B cell (primary cell): ENCODE measurements at regions of chr14 and their contacts with region 1.

Region 1: DNA sequence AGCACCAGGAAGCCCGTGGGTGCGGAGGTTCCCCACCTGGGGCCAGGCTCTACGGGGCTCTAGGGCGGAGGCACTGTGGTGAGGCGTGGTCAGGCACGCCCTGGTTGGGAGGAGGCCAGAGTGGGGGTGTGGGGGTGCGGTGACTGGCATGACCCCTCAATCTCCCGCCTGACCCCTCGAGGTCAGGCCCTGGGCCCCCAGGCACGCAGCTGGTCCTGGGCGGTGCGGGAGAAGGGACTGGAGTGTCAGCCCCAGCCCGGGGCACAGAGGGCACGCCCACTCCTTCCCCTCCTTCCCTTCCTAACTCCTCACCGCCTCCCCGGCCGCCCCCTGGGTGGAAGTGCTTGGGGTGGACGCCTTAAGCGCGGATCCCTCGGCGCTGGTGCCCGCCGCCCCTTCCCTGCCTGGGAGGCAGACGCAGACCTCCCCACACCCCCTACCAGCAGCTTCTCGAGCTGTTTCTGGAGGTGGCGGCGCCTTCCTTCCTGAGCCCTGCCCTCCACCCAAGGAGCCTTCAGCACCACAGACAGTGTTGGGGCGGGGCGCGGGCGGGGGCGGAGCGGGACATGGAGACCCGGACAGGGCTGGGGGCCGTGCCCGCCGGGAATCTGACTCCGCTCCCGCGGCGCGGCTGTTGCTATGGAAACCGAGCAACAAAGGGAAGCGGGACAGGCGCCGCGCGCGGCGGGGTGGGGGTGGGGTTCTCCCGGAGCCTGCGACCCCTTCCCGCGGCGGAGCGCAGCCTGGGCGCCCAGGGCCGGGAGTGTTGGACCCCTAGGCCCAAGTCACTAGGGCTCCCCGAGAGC is 741 bp upstream of the CRIP2 start:
- DNase-seq: peak; percentile 75
- ATAC-seq: peak; percentile 50
- H3K4me3 ChIP-seq: peak overlapping the region in 4 of 5 experiments; percentile 32 to 64 (median 55)
- H3K4me3 Mint-ChIP-seq: peak overlapping the region; percentile 80
- H3K27ac ChIP-seq: peak overlapping the region in 1 of 2 donors; percentile 57
- H3K27ac Mint-ChIP-seq: peak overlapping the region; percentile 68
- H3K4me1 ChIP-seq: peaks cover 40 to 50% of the 10 kb centered on the region in 2 donors
- H3K4me1 Mint-ChIP-seq: peaks cover 35% of the 10 kb centered on the region
- H3K27me3 ChIP-seq: peaks cover 0 to 46% (median 11%) of the 10 kb centered on the region in 4 experiments
- H3K27me3 Mint-ChIP-seq: no peaks in the 10 kb centered on the region
- CTCF ChIP-seq: no peak

Region 2: DNA sequence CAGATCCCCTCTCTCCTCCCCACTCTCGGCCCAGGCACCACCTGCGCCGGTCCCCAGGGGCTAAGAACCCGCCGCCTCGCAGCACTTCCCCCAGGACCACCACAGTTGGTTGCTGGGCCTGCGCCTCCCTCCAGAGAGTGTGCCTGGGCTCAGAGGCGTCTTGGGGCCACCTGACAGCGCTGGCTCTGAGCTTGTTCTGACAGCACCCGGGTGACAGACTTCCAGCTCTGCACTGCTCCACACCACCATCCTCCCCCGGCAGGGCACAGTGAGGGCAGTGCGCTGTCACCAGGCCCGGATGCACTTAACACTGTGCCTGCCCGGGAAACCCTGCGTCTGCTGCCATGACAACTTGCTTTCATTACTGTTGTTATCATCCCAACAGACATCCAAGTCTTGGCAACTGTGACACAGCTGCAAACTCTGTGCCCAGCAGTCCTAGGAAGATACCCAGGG is 179.7 kb before region 1 on chr14:
- CTCF ChIA-PET with region 1: no interaction called
- POLR2A ChIA-PET with region 1: interaction called, 13 read pairs
- intact Hi-C with region 1: no loop called
- DNase-seq: peak; percentile 64
- ATAC-seq: peak; percentile 66
- H3K4me3 ChIP-seq: no peak overlapping the region
- H3K4me3 Mint-ChIP-seq: peak overlapping the region; percentile 77
- H3K27ac ChIP-seq: peak overlapping the region; percentile 44 to 63
- H3K27ac Mint-ChIP-seq: peak overlapping the region; percentile 85
- H3K4me1 ChIP-seq: peaks cover 41 to 56% of the 10 kb centered on the region in 2 donors
- H3K4me1 Mint-ChIP-seq: peaks cover 53% of the 10 kb centered on the region
- H3K27me3 ChIP-seq: no peaks in the 10 kb centered on the region
- H3K27me3 Mint-ChIP-seq: no peaks in the 10 kb centered on the region
- CTCF ChIP-seq: no peak

Region 3: GRCh38 chr14:105507247-105507646 is 33.4 kb after region 1 on chr14:
- CTCF ChIA-PET with region 1: no interaction called
- POLR2A ChIA-PET with region 1: no interaction called
- intact Hi-C with region 1: no loop called
- DNase-seq: no peak
- ATAC-seq: no peak
- H3K4me3 ChIP-seq: no peak overlapping the region
- H3K4me3 Mint-ChIP-seq: no peak overlapping the region
- H3K27ac ChIP-seq: no peak overlapping the region
- H3K27ac Mint-ChIP-seq: no peak overlapping the region
- H3K4me1 ChIP-seq: peaks cover 6 to 8% of the 10 kb centered on the region in 2 donors
- H3K4me1 Mint-ChIP-seq: peaks cover 2% of the 10 kb centered on the region
- H3K27me3 ChIP-seq: peaks cover 0 to 19% (median 1%) of the 10 kb centered on the region in 4 experiments
- H3K27me3 Mint-ChIP-seq: peaks cover 20% of the 10 kb centered on the region
- CTCF ChIP-seq: no peak